ENCODE measurements at regions of chr6 and their contacts with region 1.

Region 1: DNA sequence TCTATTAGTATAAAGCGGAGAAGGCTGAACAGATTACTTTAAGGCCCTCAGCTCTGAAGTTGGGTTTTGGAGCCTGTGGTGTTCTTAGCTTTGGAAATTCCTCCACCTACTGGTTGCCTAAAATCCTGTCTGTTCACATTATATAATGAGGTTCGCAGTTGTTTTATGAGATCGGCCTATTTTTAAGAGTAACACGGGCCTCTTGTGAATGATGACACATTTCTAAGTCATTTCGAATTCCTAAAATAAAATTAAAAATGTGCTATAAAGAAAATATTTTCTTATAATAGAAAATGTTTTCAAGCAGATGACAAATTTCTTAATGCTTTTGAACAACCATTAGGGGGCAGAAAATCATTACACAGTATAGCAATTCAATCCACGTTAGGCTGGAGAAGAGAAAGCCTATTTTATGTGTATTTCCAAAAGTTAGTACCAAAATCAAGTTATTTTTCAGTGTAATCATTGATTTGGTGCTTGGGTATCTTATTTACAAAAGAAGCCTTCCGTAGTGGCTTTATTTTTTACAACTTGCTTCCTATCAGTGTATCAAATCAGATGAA is 15.8 kb upstream of the FAM8A1 start:
- DNase-seq: peak in 7 of 9 donors; percentile 36 to 67 (median 54)
- ATAC-seq: peak; percentile 74
- H3K4me3 ChIP-seq: no peak overlapping the region
- H3K4me3 Mint-ChIP-seq: peak overlapping the region in 3 of 10 donors; percentile 1 to 46 (median 8)
- H3K27ac ChIP-seq: no peak overlapping the region
- H3K27ac Mint-ChIP-seq: peak overlapping the region in 7 of 9 donors; percentile 12 to 90 (median 47)
- H3K4me1 ChIP-seq: peaks cover 0 to 5% of the 10 kb centered on the region in 2 donors
- H3K4me1 Mint-ChIP-seq: peaks cover 10 to 21% (median 12%) of the 10 kb centered on the region in 7 donors
- H3K27me3 ChIP-seq: no peaks in the 10 kb centered on the region
- H3K27me3 Mint-ChIP-seq: peaks cover 0 to 17% (median 0%) of the 10 kb centered on the region in 5 donors

Region 2: DNA sequence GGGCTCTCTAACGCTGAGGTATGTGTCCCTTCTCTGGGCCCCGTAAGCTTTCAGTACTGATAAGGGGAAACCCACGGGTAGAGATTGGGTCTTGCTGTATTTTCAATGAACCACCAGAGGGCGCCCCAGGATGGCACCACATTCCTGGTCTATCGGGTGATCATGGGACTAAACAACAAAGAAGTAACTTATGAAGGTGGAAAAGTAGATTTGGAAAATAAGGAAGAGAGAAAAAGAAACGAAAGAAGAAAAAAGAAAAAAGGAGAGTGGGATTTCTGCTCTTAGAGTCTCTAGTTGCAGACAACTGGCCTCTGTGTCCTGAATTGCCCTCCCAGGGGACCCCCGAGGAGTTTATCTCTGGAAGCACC is 1252.2 kb before region 1 on chr6:
- CTCF ChIA-PET with region 1: no interaction called
- POLR2A ChIA-PET with region 1: no interaction called
- intact Hi-C with region 1: loop called in 1 of 2 experiments (anchors 2 kb)
- DNase-seq: peak; percentile 51 to 80 (median 73)
- ATAC-seq: peak; percentile 96
- H3K4me3 ChIP-seq: peak overlapping the region; percentile 19
- H3K4me3 Mint-ChIP-seq: no peak overlapping the region
- H3K27ac ChIP-seq: peak overlapping the region; percentile 32
- H3K27ac Mint-ChIP-seq: no peak overlapping the region
- H3K4me1 ChIP-seq: peaks cover 12 to 13% of the 10 kb centered on the region in 2 donors
- H3K4me1 Mint-ChIP-seq: peaks cover 0 to 6% (median 0%) of the 10 kb centered on the region in 7 donors
- H3K27me3 ChIP-seq: no peaks in the 10 kb centered on the region
- H3K27me3 Mint-ChIP-seq: no peaks in the 10 kb centered on the region

Region 3: GRCh38 chr6:17599885-17600526 is 15.7 kb after region 1 on chr6 and contains the start of gene FAM8A1:
- CTCF ChIA-PET with region 1: interaction called, 14 read pairs
- POLR2A ChIA-PET with region 1: interaction called, 55 read pairs
- intact Hi-C with region 1: loop called in 1 of 2 experiments (anchors 1 kb)
- DNase-seq: peak; percentile 91 to 97 (median 94)
- ATAC-seq: peak; percentile 97
- H3K4me3 ChIP-seq: peak within 1 kb of the TSS; percentile 49
- H3K4me3 Mint-ChIP-seq: peak within 1 kb of the TSS; percentile 85 to 97 (median 94)
- H3K27ac ChIP-seq: peak within 1 kb of the TSS; percentile 94
- H3K27ac Mint-ChIP-seq: peak within 1 kb of the TSS; percentile 84 to 96 (median 93)
- H3K4me1 ChIP-seq: peaks cover 19 to 29% of the 10 kb centered on the region in 2 donors
- H3K4me1 Mint-ChIP-seq: peaks cover 29 to 48% (median 45%) of the 10 kb centered on the region in 7 donors
- H3K27me3 ChIP-seq: no peaks in the 10 kb centered on the region
- H3K27me3 Mint-ChIP-seq: no peaks in the 10 kb centered on the region
- total RNA-seq, gene FAM8A1: 8.0 to 26.1 (median 21.1) TPM

Region 4: DNA sequence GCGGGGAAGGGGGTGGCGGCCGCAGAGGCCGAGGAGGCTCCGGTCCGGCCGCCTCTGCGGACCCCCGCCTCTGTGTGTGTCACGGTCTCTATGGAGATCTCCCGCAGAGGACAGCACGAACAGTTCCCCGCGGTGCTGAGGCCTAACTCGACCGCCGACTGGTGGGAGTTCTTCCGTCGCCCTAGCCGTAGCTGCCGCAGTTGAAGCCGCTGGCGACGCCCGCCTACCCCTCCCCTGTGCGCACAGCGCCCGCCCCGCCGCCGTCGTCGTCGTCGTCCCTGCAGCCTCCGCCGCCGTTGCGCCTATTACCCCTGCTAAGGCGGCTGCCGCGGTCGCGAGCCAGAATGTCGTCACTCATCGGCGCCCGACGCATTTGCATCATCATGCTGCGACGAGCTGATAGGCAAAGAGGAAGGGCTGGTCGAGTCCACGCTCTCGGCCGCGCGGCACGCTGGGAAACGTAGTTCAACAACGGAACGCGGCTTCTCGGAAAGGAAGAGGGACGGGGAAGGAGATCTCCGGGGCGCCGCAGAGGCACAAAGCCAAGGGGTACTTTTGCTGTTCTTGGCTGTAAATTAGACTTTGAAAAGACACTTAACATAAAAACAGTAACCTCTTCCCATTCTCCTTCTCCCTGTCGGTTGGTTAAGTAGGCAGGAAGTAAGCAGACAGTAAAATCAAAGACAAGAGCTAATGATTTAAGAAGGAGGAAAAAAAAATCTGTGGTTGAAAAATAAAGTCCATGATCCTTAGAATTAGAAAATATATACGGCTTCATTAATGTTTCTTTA is 122.5 kb after region 1 on chr6 and contains the start of gene NUP153:
- CTCF ChIA-PET with region 1: interaction called, 4 read pairs
- POLR2A ChIA-PET with region 1: no interaction called
- intact Hi-C with region 1: loop called in 1 of 2 experiments (anchors 1 kb)
- DNase-seq: peak; percentile 98 to 100 (median 99)
- ATAC-seq: peak; percentile 85
- H3K4me3 ChIP-seq: peak within 1 kb of the TSS; percentile 94
- H3K4me3 Mint-ChIP-seq: peak within 1 kb of the TSS; percentile 86 to 97 (median 94)
- H3K27ac ChIP-seq: peak within 1 kb of the TSS; percentile 100
- H3K27ac Mint-ChIP-seq: peak within 1 kb of the TSS; percentile 92 to 98 (median 95)
- H3K4me1 ChIP-seq: peaks cover 24 to 28% of the 10 kb centered on the region in 2 donors
- H3K4me1 Mint-ChIP-seq: peaks cover 13 to 53% (median 37%) of the 10 kb centered on the region in 7 donors
- H3K27me3 ChIP-seq: no peaks in the 10 kb centered on the region
- H3K27me3 Mint-ChIP-seq: peaks cover 0 to 2% (median 0%) of the 10 kb centered on the region in 5 donors
- total RNA-seq, gene NUP153: 47.7 to 90.9 (median 53.0) TPM

Region 5: DNA sequence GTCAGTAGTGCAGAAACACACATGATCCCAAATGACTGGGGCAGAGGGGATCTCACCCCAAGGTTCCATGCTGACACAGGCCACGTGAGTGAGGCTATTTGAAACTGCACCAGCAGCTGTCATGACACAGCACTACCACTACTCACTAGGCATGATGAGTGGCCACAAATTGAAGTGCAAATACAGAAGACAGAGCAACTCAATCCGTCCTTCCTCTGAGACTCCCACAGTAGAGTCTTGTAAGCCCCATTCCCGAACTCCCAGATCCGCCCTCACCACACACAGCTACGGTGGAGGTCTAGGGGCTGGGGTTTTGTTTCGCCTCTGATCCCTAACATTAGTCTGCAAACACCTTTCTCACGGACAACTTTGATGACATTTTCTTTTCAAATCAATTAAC is 235.7 kb after region 1 on chr6:
- CTCF ChIA-PET with region 1: interaction called, 4 read pairs
- POLR2A ChIA-PET with region 1: no interaction called
- intact Hi-C with region 1: loop called (anchors 1 kb)
- DNase-seq: no peak
- ATAC-seq: no peak
- H3K4me3 ChIP-seq: no peak overlapping the region
- H3K4me3 Mint-ChIP-seq: no peak overlapping the region
- H3K27ac ChIP-seq: no peak overlapping the region
- H3K27ac Mint-ChIP-seq: no peak overlapping the region
- H3K4me1 ChIP-seq: no peaks in the 10 kb centered on the region
- H3K4me1 Mint-ChIP-seq: peaks cover 0 to 2% (median 0%) of the 10 kb centered on the region in 7 donors
- H3K27me3 ChIP-seq: no peaks in the 10 kb centered on the region
- H3K27me3 Mint-ChIP-seq: peaks cover 0 to 12% (median 4%) of the 10 kb centered on the region in 5 donors

Region 6: GRCh38 chr6:18387061-18387721 is 802.9 kb after region 1 on chr6 and contains the start of gene RNF144B:
- CTCF ChIA-PET with region 1: no interaction called
- POLR2A ChIA-PET with region 1: no interaction called
- intact Hi-C with region 1: loop called in 1 of 2 experiments (anchors 10 kb)
- DNase-seq: peak; percentile 41 to 73 (median 67)
- ATAC-seq: peak; percentile 92
- H3K4me3 ChIP-seq: peak within 1 kb of the TSS; percentile 70
- H3K4me3 Mint-ChIP-seq: peak within 1 kb of the TSS; percentile 90 to 100 (median 99)
- H3K27ac ChIP-seq: peak within 1 kb of the TSS; percentile 69
- H3K27ac Mint-ChIP-seq: peak within 1 kb of the TSS; percentile 2 to 95 (median 92)
- H3K4me1 ChIP-seq: peaks cover 4 to 18% of the 10 kb centered on the region in 2 donors
- H3K4me1 Mint-ChIP-seq: peaks cover 15 to 48% (median 35%) of the 10 kb centered on the region in 7 donors
- H3K27me3 ChIP-seq: no peaks in the 10 kb centered on the region
- H3K27me3 Mint-ChIP-seq: peaks cover 0 to 21% (median 0%) of the 10 kb centered on the region in 5 donors
- total RNA-seq, gene RNF144B: 1.5 to 23.5 (median 7.9) TPM

Measured in naive thymus-derived CD4-positive, alpha-beta T cell (primary cell).